ENCODE measurements at regions of chr12 and their contacts with region 1.

Region 1: GRCh38 chr12:130013771-130014484 is 110.1 kb upstream of the TMEM132D start:
- DNase-seq: peak; percentile 77
- ATAC-seq: peak; percentile 77
- H3K4me3 Mint-ChIP-seq: no peak overlapping the region
- H3K27ac Mint-ChIP-seq: no peak overlapping the region
- H3K4me1 Mint-ChIP-seq: no peaks in the 10 kb centered on the region
- H3K27me3 Mint-ChIP-seq: peaks cover 6% of the 10 kb centered on the region

Region 2: GRCh38 chr12:128644664-128645296 is 1369.1 kb before region 1 on chr12:
- CTCF ChIA-PET with region 1: no interaction called
- POLR2A ChIA-PET with region 1: no interaction called
- intact Hi-C with region 1: loop called in 1 of 2 experiments (anchors 5 kb)
- DNase-seq: peak; percentile 62
- ATAC-seq: no peak
- H3K4me3 Mint-ChIP-seq: no peak overlapping the region
- H3K27ac Mint-ChIP-seq: no peak overlapping the region
- H3K4me1 Mint-ChIP-seq: no peaks in the 10 kb centered on the region
- H3K27me3 Mint-ChIP-seq: peaks cover 2% of the 10 kb centered on the region

Region 3: GRCh38 chr12:128783129-128783574 is 1230.8 kb before region 1 on chr12:
- CTCF ChIA-PET with region 1: no interaction called
- POLR2A ChIA-PET with region 1: no interaction called
- intact Hi-C with region 1: loop called in 1 of 2 experiments (anchors 5 kb)
- DNase-seq: peak; percentile 70
- ATAC-seq: peak; percentile 91
- H3K4me3 Mint-ChIP-seq: peak overlapping the region; percentile 61
- H3K27ac Mint-ChIP-seq: peak overlapping the region; percentile 98
- H3K4me1 Mint-ChIP-seq: peaks cover 12% of the 10 kb centered on the region
- H3K27me3 Mint-ChIP-seq: no peaks in the 10 kb centered on the region

Region 4: DNA sequence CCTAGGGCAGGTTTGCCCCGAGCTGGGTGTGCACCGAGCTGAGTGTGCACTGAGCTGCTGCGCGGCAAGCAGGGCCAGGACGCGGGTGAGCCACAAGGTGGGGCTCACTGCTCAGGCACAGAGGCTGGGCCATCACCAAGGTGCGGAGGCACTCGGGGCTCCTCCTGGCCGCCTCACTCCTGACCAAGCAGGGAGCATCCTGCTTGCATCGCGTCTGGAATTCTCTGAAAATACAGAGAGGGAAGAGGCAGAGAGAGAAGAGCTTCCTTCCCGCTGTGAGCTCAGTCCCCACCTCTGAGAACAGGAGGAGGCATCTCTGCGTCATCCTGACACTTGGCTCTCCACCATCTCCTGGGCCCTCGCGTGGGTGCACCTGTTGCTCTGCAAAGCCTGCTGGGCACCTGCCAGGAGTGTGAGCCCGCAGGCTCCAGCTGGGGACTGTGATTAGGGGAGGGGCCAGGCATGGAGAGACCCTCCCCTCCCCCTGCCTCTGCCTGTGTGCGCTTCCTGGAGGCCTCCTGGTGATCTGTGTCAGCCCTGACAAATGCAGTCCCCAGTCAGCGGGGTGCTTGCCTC is 1044.4 kb before region 1 on chr12:
- CTCF ChIA-PET with region 1: no interaction called
- POLR2A ChIA-PET with region 1: no interaction called
- intact Hi-C with region 1: loop called in 1 of 2 experiments (anchors 5 kb)
- DNase-seq: peak; percentile 64
- ATAC-seq: peak; percentile 90
- H3K4me3 Mint-ChIP-seq: no peak overlapping the region
- H3K27ac Mint-ChIP-seq: no peak overlapping the region
- H3K4me1 Mint-ChIP-seq: peaks cover 5% of the 10 kb centered on the region
- H3K27me3 Mint-ChIP-seq: peaks cover 14% of the 10 kb centered on the region

Region 5: GRCh38 chr12:129193263-129193871 is 820.6 kb before region 1 on chr12:
- CTCF ChIA-PET with region 1: no interaction called
- POLR2A ChIA-PET with region 1: no interaction called
- intact Hi-C with region 1: loop called (anchors 2 to 5 kb)
- DNase-seq: peak; percentile 47
- ATAC-seq: no peak
- H3K4me3 Mint-ChIP-seq: no peak overlapping the region
- H3K27ac Mint-ChIP-seq: no peak overlapping the region
- H3K4me1 Mint-ChIP-seq: no peaks in the 10 kb centered on the region
- H3K27me3 Mint-ChIP-seq: no peaks in the 10 kb centered on the region

Region 6: GRCh38 chr12:129911428-129912049 is 102.4 kb before region 1 on chr12:
- CTCF ChIA-PET with region 1: no interaction called
- POLR2A ChIA-PET with region 1: no interaction called
- intact Hi-C with region 1: loop called in 1 of 2 experiments (anchors 5 kb)
- DNase-seq: peak; percentile 66
- ATAC-seq: no peak
- H3K4me3 Mint-ChIP-seq: no peak overlapping the region
- H3K27ac Mint-ChIP-seq: no peak overlapping the region
- H3K4me1 Mint-ChIP-seq: no peaks in the 10 kb centered on the region
- H3K27me3 Mint-ChIP-seq: peaks cover 4% of the 10 kb centered on the region

Region 7: DNA sequence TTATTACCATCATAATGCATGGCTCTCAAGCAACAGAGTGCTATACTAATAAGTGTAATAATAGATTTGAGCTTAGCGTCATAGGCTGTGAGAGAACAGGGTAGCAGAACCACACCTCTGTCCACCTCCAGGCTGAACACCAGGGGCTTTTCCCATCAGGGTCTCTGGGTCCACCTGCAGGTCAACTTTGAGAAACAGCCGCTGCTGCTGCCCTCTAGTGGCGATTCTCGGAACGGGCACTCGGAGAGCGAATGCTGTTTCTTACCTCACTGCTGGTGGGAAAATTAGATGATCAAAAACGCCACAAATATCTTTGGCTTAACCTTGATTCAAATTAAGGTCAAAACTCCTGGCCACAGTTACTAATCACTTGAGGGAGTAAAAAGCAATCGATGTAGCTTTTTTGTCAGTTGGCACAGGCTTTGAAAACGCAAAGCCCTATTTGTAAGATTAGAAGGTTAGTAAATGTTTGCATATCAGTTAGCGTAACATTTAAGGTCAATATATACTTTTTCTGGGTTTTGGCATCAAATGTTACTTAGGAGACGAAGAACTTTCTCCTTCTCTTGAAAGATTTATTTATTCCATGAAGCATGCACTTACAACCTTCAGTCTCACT is 17.8 kb after region 1 on chr12:
- CTCF ChIA-PET with region 1: interaction called, 12 read pairs
- POLR2A ChIA-PET with region 1: no interaction called
- intact Hi-C with region 1: no loop called
- DNase-seq: peak; percentile 81
- ATAC-seq: no peak
- H3K4me3 Mint-ChIP-seq: no peak overlapping the region
- H3K27ac Mint-ChIP-seq: no peak overlapping the region
- H3K4me1 Mint-ChIP-seq: no peaks in the 10 kb centered on the region
- H3K27me3 Mint-ChIP-seq: peaks cover 23% of the 10 kb centered on the region

Measured in activated CD4-positive, alpha-beta T cell treated with anti-CD3 and anti-CD28 coated beads for 36 hours (primary cell).